CD8-positive, alpha-beta memory T cell (primary cell): ENCODE measurements at regions of chr11 and their contacts with region 1.

Region 1: DNA sequence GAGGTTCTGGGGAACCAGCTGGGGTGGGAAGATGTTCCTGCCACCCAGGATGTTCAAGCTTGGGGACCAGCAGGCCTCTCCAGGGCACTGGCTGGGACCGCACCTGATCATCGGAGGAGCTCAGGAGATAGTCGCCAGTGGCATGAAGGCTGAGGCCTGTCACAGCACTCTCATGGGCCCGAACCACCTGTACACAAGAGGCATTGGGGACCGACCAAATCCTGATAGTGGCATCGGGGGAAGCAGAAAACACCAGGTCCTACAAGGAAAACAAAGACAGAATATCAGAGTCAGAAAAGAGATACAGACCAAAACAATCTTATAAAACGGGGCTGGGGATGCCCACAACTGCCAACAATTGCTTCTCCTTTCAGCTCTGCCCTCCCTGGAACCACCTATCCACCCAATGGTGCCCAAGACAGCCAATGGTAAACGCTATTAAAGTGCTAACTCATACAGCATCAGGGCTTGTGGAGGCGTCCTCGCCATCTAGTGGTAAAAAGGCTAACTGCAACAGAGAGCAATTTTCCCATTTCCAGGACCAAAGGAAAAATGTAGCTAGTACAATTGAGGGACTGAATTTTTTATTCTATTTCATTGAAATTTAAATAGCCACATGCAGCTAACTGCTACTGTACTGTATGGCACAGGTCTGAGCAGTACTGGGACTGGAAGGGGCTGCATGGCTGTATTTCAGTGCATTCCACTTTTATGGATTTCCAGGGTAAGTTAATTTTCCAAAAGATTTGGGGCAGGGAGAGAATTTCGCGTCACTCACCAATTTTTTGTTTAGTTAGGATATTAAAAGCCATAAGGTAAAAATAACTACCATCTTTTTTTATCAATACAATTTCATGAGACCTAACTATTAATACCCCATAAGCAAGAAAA is 7.1 kb downstream of the PRPF19 start:
- DNase-seq: peak in 4 of 5 donors; percentile 10 to 56 (median 36)
- H3K4me3 ChIP-seq: no peak overlapping the region
- H3K4me3 Mint-ChIP-seq: peak overlapping the region in 1 of 7 donors; percentile 15
- H3K27ac ChIP-seq: no peak overlapping the region
- H3K27ac Mint-ChIP-seq: peak overlapping the region in 5 of 8 donors; percentile 23 to 61 (median 38)
- H3K4me1 ChIP-seq: peaks cover 8% of the 10 kb centered on the region
- H3K4me1 Mint-ChIP-seq: peaks cover 9 to 21% (median 10%) of the 10 kb centered on the region in 3 donors
- H3K27me3 ChIP-seq: no peaks in the 10 kb centered on the region
- H3K27me3 Mint-ChIP-seq: no peaks in the 10 kb centered on the region

Region 2: DNA sequence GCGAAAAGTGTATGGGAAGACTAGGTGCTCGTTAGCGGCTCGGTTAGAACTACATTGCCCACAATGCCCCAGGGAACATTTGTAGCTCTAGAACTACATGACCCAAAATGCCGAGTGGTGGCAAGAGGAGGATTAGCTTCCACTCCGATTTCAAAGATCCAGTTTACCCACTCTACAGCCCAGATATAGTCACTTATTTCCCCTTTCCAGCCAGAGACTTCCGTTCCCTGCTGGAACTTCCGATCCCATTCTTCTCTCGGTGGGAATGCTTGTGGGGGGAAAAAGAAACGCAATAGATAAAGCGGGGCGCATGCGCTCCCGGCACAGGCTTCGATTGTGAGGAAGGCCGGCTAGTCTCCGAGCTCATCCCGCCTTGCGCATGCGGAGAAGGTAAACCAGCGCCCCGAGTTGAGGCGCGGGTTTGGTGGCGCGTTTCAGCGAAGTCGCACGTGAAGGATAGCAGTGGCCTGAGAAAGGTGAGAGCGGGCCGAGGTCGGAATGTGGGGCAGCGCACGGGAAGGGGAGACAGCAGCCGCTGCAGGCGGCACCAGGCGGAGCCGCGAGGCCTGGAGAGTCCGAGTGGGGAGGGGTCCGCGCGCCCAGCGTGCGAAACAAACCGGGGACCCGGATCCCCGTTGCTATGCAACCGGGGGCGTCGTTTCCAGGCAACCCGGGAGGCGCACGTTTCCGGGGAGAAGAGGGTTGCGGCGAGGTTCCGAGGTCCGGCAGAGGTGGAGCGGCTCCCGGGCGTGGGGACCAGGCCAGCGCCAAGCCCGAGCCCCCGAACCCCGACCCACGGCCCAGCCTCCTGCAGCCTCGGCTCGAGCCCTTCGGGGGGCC is 14.7 kb after region 1 on chr11 and contains the start of gene TMEM109:
- CTCF ChIA-PET with region 1: interaction called, 51 read pairs
- POLR2A ChIA-PET with region 1: interaction called, 33 read pairs
- DNase-seq: peak; percentile 82 to 92 (median 88)
- H3K4me3 ChIP-seq: peak within 1 kb of the TSS; percentile 91
- H3K4me3 Mint-ChIP-seq: peak within 1 kb of the TSS; percentile 93 to 99 (median 97)
- H3K27ac ChIP-seq: peak within 1 kb of the TSS; percentile 82
- H3K27ac Mint-ChIP-seq: peak within 1 kb of the TSS; percentile 95 to 99 (median 98)
- H3K4me1 ChIP-seq: peaks cover 47% of the 10 kb centered on the region
- H3K4me1 Mint-ChIP-seq: peaks cover 59 to 81% (median 63%) of the 10 kb centered on the region in 3 donors
- H3K27me3 ChIP-seq: no peaks in the 10 kb centered on the region
- H3K27me3 Mint-ChIP-seq: no peaks in the 10 kb centered on the region
- total RNA-seq, gene TMEM109: 144 to 147 TPM